ENCODE measurements at regions of chr3 and their contacts with region 1.

Region 1: GRCh38 chr3:78645628-78646310 is 1122.0 kb downstream of the ROBO1 start:
- DNase-seq: peak; percentile 39
- ATAC-seq: peak; percentile 82
- H3K4me3 ChIP-seq: no peak overlapping the region
- H3K27ac ChIP-seq: no peak overlapping the region
- H3K4me1 ChIP-seq: no peaks in the 10 kb centered on the region
- H3K27me3 ChIP-seq: no peaks in the 10 kb centered on the region
- CTCF ChIP-seq: peak; percentile 73 to 81 (median 75)
- EP300 ChIP-seq: peak in 1 of 2 experiments; percentile 45; a peak in 1 of 4 replicates
- POLR2A ChIP-seq: no peak
- RAD21 ChIP-seq: peak; percentile 85

Region 2: GRCh38 chr3:77931255-77932009 is 714.3 kb before region 1 on chr3:
- CTCF ChIA-PET with region 1: interaction called, 3 read pairs
- POLR2A ChIA-PET with region 1: no interaction called
- RAD21 ChIA-PET with region 1: no interaction called
- SMC1A ChIA-PET with region 1: interaction called, 4 read pairs
- in situ Hi-C with region 1: no loop called
- intact Hi-C with region 1: loop called (anchors 10 kb)
- DNase-seq: no peak
- ATAC-seq: no peak
- H3K4me3 ChIP-seq: no peak overlapping the region
- H3K27ac ChIP-seq: no peak overlapping the region
- H3K4me1 ChIP-seq: no peaks in the 10 kb centered on the region
- H3K27me3 ChIP-seq: no peaks in the 10 kb centered on the region
- CTCF ChIP-seq: no peak
- EP300 ChIP-seq: no peak
- POLR2A ChIP-seq: no peak
- RAD21 ChIP-seq: no peak

Region 3: GRCh38 chr3:78277801-78278200 is 368.0 kb before region 1 on chr3:
- CTCF ChIA-PET with region 1: interaction called, 14 read pairs
- POLR2A ChIA-PET with region 1: no interaction called
- RAD21 ChIA-PET with region 1: no interaction called
- SMC1A ChIA-PET with region 1: interaction called, 3 read pairs
- in situ Hi-C with region 1: no loop called
- intact Hi-C with region 1: loop called (anchors 5 kb)
- DNase-seq: no peak
- ATAC-seq: peak; percentile 65
- H3K4me3 ChIP-seq: no peak overlapping the region
- H3K27ac ChIP-seq: no peak overlapping the region
- H3K4me1 ChIP-seq: peaks cover 7% of the 10 kb centered on the region
- H3K27me3 ChIP-seq: no peaks in the 10 kb centered on the region; a peak in 1 of 4 replicates
- CTCF ChIP-seq: no peak
- EP300 ChIP-seq: no peak
- POLR2A ChIP-seq: no peak
- RAD21 ChIP-seq: no peak

Region 4: GRCh38 chr3:78614486-78614885 is 31.3 kb before region 1 on chr3:
- CTCF ChIA-PET with region 1: interaction called, 4 read pairs
- POLR2A ChIA-PET with region 1: interaction called, 3 read pairs
- RAD21 ChIA-PET with region 1: interaction called, 13 read pairs
- SMC1A ChIA-PET with region 1: interaction called, 7 read pairs
- in situ Hi-C with region 1: no loop called
- intact Hi-C with region 1: no loop called
- DNase-seq: no peak
- ATAC-seq: no peak
- H3K4me3 ChIP-seq: no peak overlapping the region
- H3K27ac ChIP-seq: no peak overlapping the region
- H3K4me1 ChIP-seq: no peaks in the 10 kb centered on the region
- H3K27me3 ChIP-seq: no peaks in the 10 kb centered on the region
- CTCF ChIP-seq: no peak
- EP300 ChIP-seq: no peak
- POLR2A ChIP-seq: no peak
- RAD21 ChIP-seq: no peak

Region 5: DNA sequence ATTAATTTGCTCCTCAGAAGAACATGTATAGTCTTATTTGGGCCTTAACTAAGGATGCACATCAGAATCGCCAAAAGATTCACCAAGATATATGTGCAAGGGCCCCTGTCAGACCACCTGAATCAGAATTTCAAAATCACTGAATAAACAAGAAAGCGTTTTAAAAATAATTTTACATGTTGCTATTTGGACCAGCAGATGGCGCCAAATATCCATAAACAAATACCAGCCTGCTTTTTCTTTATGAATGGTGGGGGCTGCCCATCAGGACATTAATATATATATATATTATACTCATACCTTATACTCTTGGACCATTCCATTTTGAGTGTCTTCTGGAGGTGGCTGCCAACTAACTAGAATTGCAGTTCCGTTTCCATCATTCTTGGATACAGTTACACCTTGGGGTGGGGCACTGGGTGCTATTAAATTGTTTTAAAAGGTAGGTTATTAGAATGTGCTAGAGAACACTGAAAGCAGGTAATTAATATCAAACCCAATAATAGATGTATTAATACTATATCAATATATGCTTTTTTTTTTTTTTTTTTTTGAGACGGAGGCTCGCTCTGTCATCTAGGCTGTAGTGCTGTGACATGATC is 13.7 kb after region 1 on chr3:
- CTCF ChIA-PET with region 1: interaction called, 46 read pairs
- POLR2A ChIA-PET with region 1: no interaction called
- RAD21 ChIA-PET with region 1: interaction called, 14 read pairs
- SMC1A ChIA-PET with region 1: interaction called, 8 read pairs
- in situ Hi-C with region 1: no loop called
- intact Hi-C with region 1: no loop called
- DNase-seq: no peak
- ATAC-seq: peak; percentile 41
- H3K4me3 ChIP-seq: no peak overlapping the region
- H3K27ac ChIP-seq: no peak overlapping the region
- H3K4me1 ChIP-seq: no peaks in the 10 kb centered on the region
- H3K27me3 ChIP-seq: no peaks in the 10 kb centered on the region
- CTCF ChIP-seq: peak; percentile 29 to 61 (median 30); a peak in 5 of 6 replicates
- EP300 ChIP-seq: no peak
- POLR2A ChIP-seq: no peak
- RAD21 ChIP-seq: peak; percentile 80

Measured in GM12878 (cell line).